ENCODE measurements at regions of chr14 and their contacts with region 1.

Region 1: GRCh38 chr14:69460093-69460701 is 24.3 kb upstream of the PLEKHD1 start:
- DNase-seq: peak; percentile 27
- ATAC-seq: peak; percentile 92
- H3K4me3 Mint-ChIP-seq: no peak overlapping the region
- H3K27ac Mint-ChIP-seq: no peak overlapping the region
- H3K4me1 Mint-ChIP-seq: no peaks in the 10 kb centered on the region
- H3K27me3 Mint-ChIP-seq: no peaks in the 10 kb centered on the region
- CTCF ChIP-seq: no peak

Region 2: GRCh38 chr14:69129264-69129880 is 330.8 kb before region 1 on chr14:
- CTCF ChIA-PET with region 1: no interaction called
- POLR2A ChIA-PET with region 1: no interaction called
- intact Hi-C with region 1: loop called (anchors 1 kb)
- DNase-seq: peak; percentile 24
- ATAC-seq: peak; percentile 76
- H3K4me3 Mint-ChIP-seq: no peak overlapping the region
- H3K27ac Mint-ChIP-seq: peak overlapping the region; percentile 54
- H3K4me1 Mint-ChIP-seq: peaks cover 35% of the 10 kb centered on the region
- H3K27me3 Mint-ChIP-seq: no peaks in the 10 kb centered on the region
- CTCF ChIP-seq: peak; percentile 92

Region 3: GRCh38 chr14:69247676-69248440 is 212.3 kb before region 1 on chr14:
- CTCF ChIA-PET with region 1: interaction called, 124 read pairs
- POLR2A ChIA-PET with region 1: no interaction called
- intact Hi-C with region 1: no loop called
- DNase-seq: no peak
- ATAC-seq: no peak
- H3K4me3 Mint-ChIP-seq: no peak overlapping the region
- H3K27ac Mint-ChIP-seq: no peak overlapping the region
- H3K4me1 Mint-ChIP-seq: no peaks in the 10 kb centered on the region
- H3K27me3 Mint-ChIP-seq: peaks cover 20% of the 10 kb centered on the region
- CTCF ChIP-seq: no peak

Region 4: GRCh38 chr14:69428289-69428998 is 31.8 kb before region 1 on chr14:
- CTCF ChIA-PET with region 1: interaction called, 3 read pairs
- POLR2A ChIA-PET with region 1: no interaction called
- intact Hi-C with region 1: loop called (anchors 2 kb)
- DNase-seq: no peak
- ATAC-seq: peak; percentile 89
- H3K4me3 Mint-ChIP-seq: no peak overlapping the region
- H3K27ac Mint-ChIP-seq: peak overlapping the region; percentile 74
- H3K4me1 Mint-ChIP-seq: peaks cover 35% of the 10 kb centered on the region
- H3K27me3 Mint-ChIP-seq: no peaks in the 10 kb centered on the region
- CTCF ChIP-seq: no peak

Region 5: DNA sequence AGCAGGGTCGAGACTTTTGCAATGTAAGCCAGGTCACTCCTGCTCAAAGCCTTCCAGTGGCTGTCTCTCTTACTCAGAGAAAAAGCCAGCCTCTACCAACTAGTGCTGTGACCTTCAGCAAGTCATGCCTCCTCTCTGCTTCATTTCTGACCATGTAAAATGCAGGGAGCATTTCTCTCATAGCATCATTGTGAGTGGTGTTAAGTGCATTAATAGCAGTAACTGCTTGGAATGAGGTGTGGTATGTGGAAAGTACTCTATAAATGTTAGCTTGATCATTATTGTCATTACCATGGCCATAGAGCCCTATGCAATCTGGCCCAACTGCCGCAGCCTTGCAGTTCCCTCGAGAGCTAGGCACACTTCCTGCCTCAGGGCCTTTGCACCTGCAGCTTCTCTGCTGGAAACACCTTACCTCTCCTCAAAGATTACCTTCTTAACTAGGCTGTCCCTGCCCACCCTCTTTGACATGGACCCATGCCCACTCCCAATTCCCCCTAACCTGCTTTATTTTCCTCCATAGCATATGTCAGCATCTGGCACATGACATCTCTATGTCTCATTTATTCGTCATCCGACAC is 35.2 kb after region 1 on chr14:
- CTCF ChIA-PET with region 1: no interaction called
- POLR2A ChIA-PET with region 1: no interaction called
- intact Hi-C with region 1: no loop called
- DNase-seq: no peak
- ATAC-seq: no peak
- H3K4me3 Mint-ChIP-seq: no peak overlapping the region
- H3K27ac Mint-ChIP-seq: no peak overlapping the region
- H3K4me1 Mint-ChIP-seq: no peaks in the 10 kb centered on the region
- H3K27me3 Mint-ChIP-seq: peaks cover 27% of the 10 kb centered on the region
- CTCF ChIP-seq: no peak

Region 6: GRCh38 chr14:69505338-69506240 is 45.4 kb after region 1 on chr14:
- CTCF ChIA-PET with region 1: no interaction called
- POLR2A ChIA-PET with region 1: no interaction called
- intact Hi-C with region 1: no loop called
- DNase-seq: no peak
- ATAC-seq: no peak
- H3K4me3 Mint-ChIP-seq: no peak overlapping the region
- H3K27ac Mint-ChIP-seq: no peak overlapping the region
- H3K4me1 Mint-ChIP-seq: no peaks in the 10 kb centered on the region
- H3K27me3 Mint-ChIP-seq: peaks cover 8% of the 10 kb centered on the region
- CTCF ChIP-seq: no peak

Region 7: GRCh38 chr14:69611201-69612011 is 151.2 kb after region 1 on chr14 and contains the start of gene SUSD6:
- CTCF ChIA-PET with region 1: no interaction called
- POLR2A ChIA-PET with region 1: no interaction called
- intact Hi-C with region 1: no loop called
- DNase-seq: peak; percentile 87
- ATAC-seq: peak; percentile 68
- H3K4me3 Mint-ChIP-seq: peak within 1 kb of the TSS; percentile 97
- H3K27ac Mint-ChIP-seq: peak within 1 kb of the TSS; percentile 99
- H3K4me1 Mint-ChIP-seq: peaks cover 54% of the 10 kb centered on the region
- H3K27me3 Mint-ChIP-seq: no peaks in the 10 kb centered on the region
- CTCF ChIP-seq: no peak
- total RNA-seq, gene SUSD6: 63.5 and 67.1 TPM in 2 replicates

Region 8: GRCh38 chr14:69643443-69644164 is 183.4 kb after region 1 on chr14:
- CTCF ChIA-PET with region 1: no interaction called
- POLR2A ChIA-PET with region 1: interaction called, 12 read pairs
- intact Hi-C with region 1: no loop called
- DNase-seq: no peak
- ATAC-seq: no peak
- H3K4me3 Mint-ChIP-seq: peak overlapping the region; percentile 52
- H3K27ac Mint-ChIP-seq: peak overlapping the region; percentile 85
- H3K4me1 Mint-ChIP-seq: peaks cover 91% of the 10 kb centered on the region
- H3K27me3 Mint-ChIP-seq: no peaks in the 10 kb centered on the region
- CTCF ChIP-seq: no peak

Region 9: DNA sequence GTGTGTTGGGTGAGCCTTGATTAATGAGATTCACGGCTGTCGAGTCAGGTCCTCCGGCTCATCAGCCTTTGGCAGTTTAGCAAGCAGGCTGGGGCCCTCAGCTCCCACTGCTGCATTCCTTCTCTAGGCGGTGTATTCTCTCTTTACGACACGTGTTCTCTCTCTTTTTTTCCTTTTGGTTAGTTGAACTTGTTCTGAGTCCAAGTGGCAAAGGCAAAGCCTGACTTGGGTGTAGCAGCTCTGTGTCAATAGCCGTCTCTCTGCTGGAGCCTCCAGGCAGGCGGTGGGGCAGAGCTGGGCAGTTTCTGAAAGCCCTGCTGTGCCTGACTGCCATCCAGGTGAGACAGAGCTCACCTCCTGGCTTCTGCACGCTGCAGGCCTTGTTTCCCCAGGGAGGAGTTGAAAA is 197.8 kb after region 1 on chr14:
- CTCF ChIA-PET with region 1: no interaction called
- POLR2A ChIA-PET with region 1: no interaction called
- intact Hi-C with region 1: no loop called
- DNase-seq: no peak
- ATAC-seq: no peak
- H3K4me3 Mint-ChIP-seq: no peak overlapping the region
- H3K27ac Mint-ChIP-seq: no peak overlapping the region
- H3K4me1 Mint-ChIP-seq: peaks cover 85% of the 10 kb centered on the region
- H3K27me3 Mint-ChIP-seq: no peaks in the 10 kb centered on the region
- CTCF ChIP-seq: no peak